ENCODE measurements at regions of chr6 and their contacts with region 1.

Region 1: GRCh38 chr6:17156112-17156921 is 54.5 kb downstream of the STMND1 start:
- DNase-seq: peak; percentile 84
- H3K4me3 ChIP-seq: no peak overlapping the region
- H3K27ac ChIP-seq: no peak overlapping the region
- H3K4me1 ChIP-seq: no peaks in the 10 kb centered on the region
- H3K27me3 ChIP-seq: no peaks in the 10 kb centered on the region
- CTCF ChIP-seq: peak; percentile 86

Region 2: DNA sequence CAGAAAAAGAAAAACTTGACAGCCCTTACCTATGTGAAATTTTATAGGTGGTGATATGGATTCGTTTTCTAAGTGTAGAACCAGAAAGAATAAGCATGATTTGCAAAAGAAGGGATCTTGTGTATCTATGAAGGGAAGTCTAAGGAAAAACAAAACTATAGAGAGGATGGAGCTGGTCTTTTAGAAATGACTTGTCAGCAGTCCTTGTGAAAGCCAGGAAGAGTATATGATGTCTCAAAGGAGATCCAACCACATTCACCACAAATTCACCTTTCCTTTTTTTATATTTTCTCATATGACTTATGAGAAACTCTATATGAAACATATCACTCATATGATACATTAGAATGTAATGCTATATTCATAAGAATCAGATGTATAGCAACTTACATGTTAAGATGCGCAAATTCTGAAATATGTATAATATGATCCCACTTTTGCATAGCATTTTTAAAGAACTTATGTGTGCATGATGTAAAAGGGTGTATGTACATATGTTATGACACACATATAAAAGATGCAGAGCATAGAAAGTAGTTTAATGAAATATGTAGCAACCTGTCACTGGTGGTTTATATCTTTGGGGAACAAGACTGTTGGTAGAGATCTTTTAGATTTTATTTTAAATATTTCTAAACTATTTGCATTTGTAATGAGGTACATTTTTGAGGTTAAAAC is 642.3 kb after region 1 on chr6:
- intact Hi-C with region 1: loop called (anchors 5 kb)
- DNase-seq: no peak
- H3K4me3 ChIP-seq: no peak overlapping the region
- H3K27ac ChIP-seq: no peak overlapping the region
- H3K4me1 ChIP-seq: no peaks in the 10 kb centered on the region
- H3K27me3 ChIP-seq: no peaks in the 10 kb centered on the region
- CTCF ChIP-seq: no peak

Measured in colonic mucosa (tissue), 4 donors.